ENCODE measurements at regions of chr7 and their contacts with region 1.

Region 1: DNA sequence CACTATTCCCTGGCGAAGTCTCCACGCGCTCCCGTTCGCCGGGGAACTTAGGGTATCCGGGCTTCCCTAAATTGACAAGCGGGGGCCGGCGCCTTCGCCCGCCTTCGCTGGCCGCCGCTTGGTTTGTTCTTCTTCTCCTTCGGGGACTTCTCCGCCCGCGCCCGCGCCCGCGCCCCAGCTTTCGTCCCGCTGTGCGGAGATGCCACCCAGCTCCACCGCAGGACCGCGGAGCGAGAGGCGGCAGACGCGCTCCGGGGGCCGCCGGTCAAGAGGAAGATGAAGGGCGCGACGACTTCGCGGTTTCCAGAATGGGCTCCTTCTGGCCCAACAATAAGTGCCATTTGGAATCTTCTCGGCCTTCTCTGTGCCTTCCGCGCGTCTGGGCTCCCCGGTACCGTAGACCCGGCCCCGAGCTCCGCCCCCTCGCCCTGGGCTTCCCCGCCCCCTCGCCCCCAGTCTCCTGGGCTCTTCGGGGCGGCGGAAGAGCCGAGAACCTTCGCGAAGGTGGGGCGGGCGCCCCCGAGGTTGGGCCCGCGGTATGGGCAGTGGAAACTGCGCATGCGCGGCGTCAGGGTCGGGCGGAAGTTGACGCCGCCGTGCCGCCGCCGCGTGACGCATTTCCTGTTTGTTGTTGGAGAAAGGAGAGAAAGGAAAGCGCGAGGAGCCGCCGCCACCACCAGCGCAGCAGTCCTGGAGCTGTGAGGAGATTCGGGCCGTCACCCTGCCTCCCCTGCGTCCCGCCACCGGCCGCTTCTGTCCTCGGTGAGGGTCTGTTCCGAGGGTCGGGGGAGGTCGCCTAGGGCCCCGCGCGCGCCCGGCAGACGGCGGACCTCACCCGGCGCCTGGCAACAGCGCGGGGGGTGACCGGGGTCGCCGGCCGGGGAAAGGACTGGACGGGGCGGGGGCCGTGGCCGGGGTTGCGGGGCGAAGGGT is at the start of gene DNAJB6:
- DNase-seq: peak; percentile 90
- H3K4me3 Mint-ChIP-seq: peak within 1 kb of the TSS; percentile 79
- H3K27ac Mint-ChIP-seq: peak within 1 kb of the TSS; percentile 97
- H3K4me1 Mint-ChIP-seq: peaks cover 13% of the 10 kb centered on the region
- H3K27me3 Mint-ChIP-seq: no peaks in the 10 kb centered on the region
- CTCF ChIP-seq: no peak
- total RNA-seq, gene DNAJB6: 110 and 124 TPM in 2 replicates

Region 2: DNA sequence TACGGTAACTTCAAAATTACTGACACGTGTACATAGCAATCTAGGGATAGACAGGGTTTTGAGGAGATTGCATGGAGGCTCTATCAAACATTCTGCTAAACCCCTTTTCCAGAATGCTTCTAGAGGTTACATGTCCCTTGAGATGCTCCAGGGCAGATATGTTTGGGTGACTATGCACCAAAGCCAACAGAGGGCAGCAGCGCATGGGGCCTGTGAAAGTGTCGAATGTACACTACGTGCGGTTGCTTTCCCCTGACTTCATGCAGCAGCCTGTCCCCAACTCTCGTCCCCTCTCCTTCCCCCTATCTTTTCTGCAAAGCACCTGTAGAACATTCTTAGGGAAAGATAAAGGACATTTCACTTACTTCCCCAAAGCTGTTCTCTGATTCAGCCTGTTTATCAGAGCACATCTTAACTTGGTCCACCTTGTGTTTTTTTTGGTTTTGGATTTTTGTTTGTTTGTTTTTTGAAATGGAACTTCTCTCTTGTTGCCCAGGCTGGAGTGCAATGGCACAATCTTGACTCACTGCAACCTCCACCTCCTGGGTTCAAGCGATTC is 107.7 kb before region 1 on chr7:
- CTCF ChIA-PET with region 1: interaction called, 3 read pairs
- POLR2A ChIA-PET with region 1: interaction called, 4 read pairs
- intact Hi-C with region 1: loop called (anchors 1 kb)
- DNase-seq: peak; percentile 42
- H3K4me3 Mint-ChIP-seq: no peak overlapping the region
- H3K27ac Mint-ChIP-seq: no peak overlapping the region
- H3K4me1 Mint-ChIP-seq: peaks cover 5% of the 10 kb centered on the region
- H3K27me3 Mint-ChIP-seq: no peaks in the 10 kb centered on the region
- CTCF ChIP-seq: no peak

Region 3: DNA sequence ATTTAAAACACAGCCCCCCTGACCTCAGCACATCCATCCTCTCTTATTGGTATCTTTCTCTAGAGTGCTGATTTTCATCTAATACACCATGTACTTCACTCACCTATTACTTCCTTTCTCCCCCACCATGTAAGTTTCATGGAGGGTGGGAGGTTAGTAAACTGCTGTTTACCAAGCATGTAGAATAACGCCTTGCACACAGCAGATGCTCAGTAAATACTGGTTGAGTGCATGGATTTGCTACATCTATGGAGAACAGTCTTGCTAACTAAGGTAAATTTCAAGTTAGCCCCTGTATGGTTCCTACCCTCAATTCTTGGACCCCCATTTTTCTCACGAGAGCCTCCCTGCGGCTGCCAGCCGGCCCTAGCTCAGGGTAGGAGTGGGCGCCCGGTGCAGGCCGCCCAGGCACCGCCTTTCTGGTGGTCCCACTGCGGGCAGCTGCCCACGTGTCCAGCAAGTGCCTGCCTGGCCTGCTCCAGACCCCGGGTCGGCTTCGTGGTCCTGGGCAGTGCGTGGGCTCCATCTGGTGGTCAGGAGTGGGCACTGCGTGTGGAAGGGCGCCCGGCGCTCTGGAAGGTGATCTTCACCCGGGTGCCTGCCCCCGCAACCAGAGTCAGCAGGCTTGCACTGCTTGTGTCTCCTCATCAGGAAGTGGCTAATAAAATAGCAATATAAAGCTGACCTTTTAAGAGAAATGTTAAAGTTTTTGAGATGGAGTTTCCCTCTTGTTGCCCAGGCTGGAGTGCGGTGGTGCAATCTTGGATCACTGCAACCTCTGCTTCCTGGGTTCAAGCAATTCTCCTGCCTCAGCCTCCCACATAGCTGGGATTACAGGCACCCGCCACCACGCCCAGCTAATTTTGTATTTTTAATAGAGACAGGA is 63.2 kb before region 1 on chr7:
- CTCF ChIA-PET with region 1: interaction called, 15 read pairs
- POLR2A ChIA-PET with region 1: interaction called, 14 read pairs
- intact Hi-C with region 1: loop called (anchors 1 kb)
- DNase-seq: peak; percentile 67
- H3K4me3 Mint-ChIP-seq: peak overlapping the region; percentile 10
- H3K27ac Mint-ChIP-seq: peak overlapping the region; percentile 86
- H3K4me1 Mint-ChIP-seq: peaks cover 23% of the 10 kb centered on the region
- H3K27me3 Mint-ChIP-seq: no peaks in the 10 kb centered on the region
- CTCF ChIP-seq: peak; percentile 95

Region 4: DNA sequence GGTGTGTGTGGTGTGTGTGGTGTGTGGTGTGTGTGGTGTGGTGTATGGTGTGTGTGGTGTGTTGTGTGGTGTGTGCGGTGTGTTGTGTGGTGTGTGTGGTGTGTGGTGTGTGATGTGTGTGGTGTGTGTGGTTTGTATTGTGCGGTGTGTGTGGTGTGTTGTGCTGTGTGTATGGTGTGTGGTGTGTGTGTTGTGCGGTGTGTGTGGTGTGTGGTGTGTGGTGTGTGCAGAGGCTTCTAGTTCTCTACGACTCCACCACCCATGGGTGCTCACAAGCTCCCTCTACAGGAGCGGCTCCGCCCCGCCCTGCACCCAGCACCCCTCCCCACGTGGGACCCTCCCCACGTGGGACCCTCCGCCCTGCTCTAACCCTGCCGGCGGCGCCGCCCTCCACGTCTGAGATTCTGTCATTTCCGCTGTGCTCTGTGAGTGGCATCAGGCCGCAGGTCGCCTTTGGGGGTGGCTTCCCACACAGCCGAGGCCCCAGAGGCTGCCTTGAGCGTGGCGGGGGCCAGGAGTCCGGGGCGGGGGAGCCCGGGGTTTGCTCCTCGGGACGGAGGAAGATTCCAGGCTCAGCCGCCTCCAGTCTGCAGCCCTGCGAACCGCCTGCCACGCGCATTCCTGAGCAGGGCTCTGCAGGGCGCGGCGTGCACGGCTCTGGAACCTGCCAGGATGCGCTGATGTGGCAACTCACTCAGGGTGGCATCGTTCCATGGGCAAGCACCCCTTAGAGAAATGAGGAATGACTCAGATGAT is 36.9 kb before region 1 on chr7:
- CTCF ChIA-PET with region 1: interaction called, 15 read pairs
- POLR2A ChIA-PET with region 1: interaction called, 31 read pairs
- intact Hi-C with region 1: loop called (anchors 1 kb)
- DNase-seq: peak; percentile 94
- H3K4me3 Mint-ChIP-seq: peak overlapping the region; percentile 68
- H3K27ac Mint-ChIP-seq: peak overlapping the region; percentile 78
- H3K4me1 Mint-ChIP-seq: peaks cover 26% of the 10 kb centered on the region
- H3K27me3 Mint-ChIP-seq: no peaks in the 10 kb centered on the region
- CTCF ChIP-seq: peak; percentile 50

Region 5: GRCh38 chr7:157323419-157323818 is 13.2 kb before region 1 on chr7:
- CTCF ChIA-PET with region 1: interaction called, 6 read pairs
- POLR2A ChIA-PET with region 1: interaction called, 48 read pairs
- intact Hi-C with region 1: no loop called
- DNase-seq: no peak
- H3K4me3 Mint-ChIP-seq: no peak overlapping the region
- H3K27ac Mint-ChIP-seq: no peak overlapping the region
- H3K4me1 Mint-ChIP-seq: peaks cover 2% of the 10 kb centered on the region
- H3K27me3 Mint-ChIP-seq: no peaks in the 10 kb centered on the region
- CTCF ChIP-seq: no peak

Region 6: GRCh38 chr7:157386979-157387800 is 50.5 kb after region 1 on chr7:
- CTCF ChIA-PET with region 1: interaction called, 4 read pairs
- POLR2A ChIA-PET with region 1: interaction called, 3 read pairs
- intact Hi-C with region 1: loop called (anchors 5 kb)
- DNase-seq: peak; percentile 86
- H3K4me3 Mint-ChIP-seq: no peak overlapping the region
- H3K27ac Mint-ChIP-seq: peak overlapping the region; percentile 16
- H3K4me1 Mint-ChIP-seq: peaks cover 8% of the 10 kb centered on the region
- H3K27me3 Mint-ChIP-seq: no peaks in the 10 kb centered on the region
- CTCF ChIP-seq: peak; percentile 86

Region 7: DNA sequence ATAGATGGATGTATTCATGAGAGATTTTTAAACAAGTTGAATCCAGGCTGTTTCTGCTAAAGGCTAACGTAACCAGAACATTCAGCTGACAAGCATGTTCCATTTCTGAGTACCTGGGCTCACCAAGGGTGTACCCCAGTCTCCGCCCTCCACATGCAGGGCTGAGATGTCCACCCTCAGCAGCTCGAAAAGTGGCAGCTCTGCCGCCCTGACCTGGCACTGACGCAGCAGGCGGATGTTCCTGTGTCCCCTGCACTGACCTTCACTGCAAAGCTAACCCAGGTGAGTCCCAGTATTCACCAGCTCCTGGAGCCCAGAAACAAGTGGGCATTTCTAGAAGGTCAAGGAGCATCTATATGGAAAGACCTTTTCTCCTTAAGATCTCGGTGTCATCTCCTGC is 813.6 kb after region 1 on chr7:
- CTCF ChIA-PET with region 1: no interaction called
- POLR2A ChIA-PET with region 1: no interaction called
- intact Hi-C with region 1: no loop called
- DNase-seq: no peak
- H3K4me3 Mint-ChIP-seq: no peak overlapping the region
- H3K27ac Mint-ChIP-seq: no peak overlapping the region
- H3K4me1 Mint-ChIP-seq: no peaks in the 10 kb centered on the region
- H3K27me3 Mint-ChIP-seq: no peaks in the 10 kb centered on the region
- CTCF ChIP-seq: no peak

Measured in MCF 10A (cell line).